Thyroid gland (tissue), 4 donors: ENCODE measurements at regions of chr5 and their contacts with region 1.

Region 1: DNA sequence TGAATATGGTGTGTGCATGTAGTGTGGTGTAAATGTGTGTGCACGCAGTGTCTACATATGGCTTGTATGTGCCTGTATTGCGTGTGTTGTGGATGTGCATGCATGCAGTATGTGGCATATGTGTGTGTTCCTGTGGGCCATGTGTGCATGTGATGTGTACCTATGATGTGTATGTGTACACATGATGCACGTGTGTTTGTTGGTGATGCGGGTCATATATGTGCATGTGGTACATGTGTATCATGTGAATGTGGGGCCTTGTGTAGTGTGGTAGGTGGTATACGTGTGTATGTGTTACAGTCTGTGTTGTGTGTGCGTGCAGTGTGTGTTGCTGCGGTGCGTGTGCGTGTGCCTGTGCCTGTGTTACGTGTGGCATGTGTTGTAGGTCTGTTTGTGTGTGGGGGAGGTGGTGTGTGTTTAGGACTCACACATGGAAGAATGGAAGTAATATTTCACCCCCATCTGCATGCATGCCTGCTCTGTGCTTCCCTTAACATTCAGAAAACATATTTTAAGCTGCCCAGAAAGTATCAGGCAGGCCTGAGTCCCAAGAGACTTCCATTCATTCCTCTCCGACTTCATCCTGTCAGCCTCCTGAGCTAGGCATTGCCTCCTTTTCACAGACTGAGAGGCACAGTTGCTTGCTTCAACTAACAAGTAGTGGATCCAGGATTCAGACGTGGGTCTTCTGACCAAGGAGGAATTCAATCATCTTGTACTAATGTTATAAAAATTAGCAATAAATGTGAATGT is 55.4 kb upstream of the RUFY1 start:
- DNase-seq: no peak
- H3K4me3 ChIP-seq: no peak overlapping the region
- H3K27ac ChIP-seq: no peak overlapping the region
- H3K4me1 ChIP-seq: no peaks in the 10 kb centered on the region
- H3K27me3 ChIP-seq: no peaks in the 10 kb centered on the region
- CTCF ChIP-seq: no peak
- POLR2A ChIP-seq: no peak

Region 2: GRCh38 chr5:179166886-179167841 is 327.8 kb before region 1 on chr5:
- intact Hi-C with region 1: loop called (anchors 5 kb)
- DNase-seq: peak; percentile 40 to 41
- H3K4me3 ChIP-seq: no peak overlapping the region
- H3K27ac ChIP-seq: no peak overlapping the region
- H3K4me1 ChIP-seq: peaks cover 3 to 10% of the 10 kb centered on the region in 2 donors
- H3K27me3 ChIP-seq: no peaks in the 10 kb centered on the region
- CTCF ChIP-seq: peak; percentile 30 to 98 (median 73)
- POLR2A ChIP-seq: no peak